Caco-2 (cell line): ENCODE measurements at regions of chr5 and their contacts with region 1.

Region 1: GRCh38 chr5:174636086-174636485 is 88.3 kb upstream of the MSX2 start:
- DNase-seq: peak; percentile 59 to 75
- H3K4me3 ChIP-seq: no peak overlapping the region
- H3K4me3 Mint-ChIP-seq: no peak overlapping the region
- H3K27ac Mint-ChIP-seq: no peak overlapping the region
- H3K4me1 ChIP-seq: peaks cover 24% of the 10 kb centered on the region
- H3K4me1 Mint-ChIP-seq: peaks cover 41% of the 10 kb centered on the region
- H3K27me3 ChIP-seq: no peaks in the 10 kb centered on the region
- H3K27me3 Mint-ChIP-seq: no peaks in the 10 kb centered on the region
- CTCF ChIP-seq: no peak

Region 2: DNA sequence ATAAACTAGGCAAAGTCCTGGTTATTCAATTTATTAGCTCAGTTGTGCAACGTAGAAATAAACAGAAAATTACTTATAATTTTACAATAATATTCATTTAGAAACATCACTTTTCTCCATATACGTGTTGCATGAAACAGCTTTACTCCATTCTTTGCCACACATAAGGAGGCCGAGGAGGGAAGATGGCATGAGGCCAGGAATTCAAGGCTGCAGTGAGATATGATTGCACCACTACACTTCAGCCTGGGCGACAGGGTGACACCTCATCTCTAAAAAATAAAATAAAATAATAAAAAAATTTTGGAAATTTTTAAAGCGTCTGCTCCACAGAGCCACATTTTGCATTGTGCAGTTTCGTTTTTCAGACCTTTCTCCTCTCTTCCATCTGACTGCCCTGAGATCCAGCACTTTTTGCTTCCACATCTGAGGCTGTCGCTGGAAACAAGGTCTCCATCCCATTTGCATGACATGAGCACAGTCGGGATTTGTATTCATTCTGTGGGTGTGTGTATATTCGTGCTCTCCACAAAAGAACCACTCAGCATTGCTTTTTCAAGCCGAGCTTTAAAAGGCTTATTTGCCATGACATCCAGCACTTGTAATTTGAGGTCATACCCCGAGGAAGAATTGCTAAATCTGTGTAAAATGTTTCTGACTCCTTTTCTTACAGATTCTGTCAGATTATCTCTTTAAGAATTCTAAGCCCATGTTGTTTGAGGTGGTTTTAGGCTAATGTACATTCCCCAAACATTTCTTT is 10.3 kb before region 1 on chr5:
- CTCF ChIA-PET with region 1: no interaction called
- POLR2A ChIA-PET with region 1: no interaction called
- intact Hi-C with region 1: loop called (anchors 1 kb)
- DNase-seq: no peak
- H3K4me3 ChIP-seq: no peak overlapping the region
- H3K4me3 Mint-ChIP-seq: no peak overlapping the region
- H3K27ac Mint-ChIP-seq: peak overlapping the region; percentile 41
- H3K4me1 ChIP-seq: peaks cover 51% of the 10 kb centered on the region
- H3K4me1 Mint-ChIP-seq: peaks cover 49% of the 10 kb centered on the region
- H3K27me3 ChIP-seq: no peaks in the 10 kb centered on the region
- H3K27me3 Mint-ChIP-seq: no peaks in the 10 kb centered on the region
- CTCF ChIP-seq: no peak

Region 3: DNA sequence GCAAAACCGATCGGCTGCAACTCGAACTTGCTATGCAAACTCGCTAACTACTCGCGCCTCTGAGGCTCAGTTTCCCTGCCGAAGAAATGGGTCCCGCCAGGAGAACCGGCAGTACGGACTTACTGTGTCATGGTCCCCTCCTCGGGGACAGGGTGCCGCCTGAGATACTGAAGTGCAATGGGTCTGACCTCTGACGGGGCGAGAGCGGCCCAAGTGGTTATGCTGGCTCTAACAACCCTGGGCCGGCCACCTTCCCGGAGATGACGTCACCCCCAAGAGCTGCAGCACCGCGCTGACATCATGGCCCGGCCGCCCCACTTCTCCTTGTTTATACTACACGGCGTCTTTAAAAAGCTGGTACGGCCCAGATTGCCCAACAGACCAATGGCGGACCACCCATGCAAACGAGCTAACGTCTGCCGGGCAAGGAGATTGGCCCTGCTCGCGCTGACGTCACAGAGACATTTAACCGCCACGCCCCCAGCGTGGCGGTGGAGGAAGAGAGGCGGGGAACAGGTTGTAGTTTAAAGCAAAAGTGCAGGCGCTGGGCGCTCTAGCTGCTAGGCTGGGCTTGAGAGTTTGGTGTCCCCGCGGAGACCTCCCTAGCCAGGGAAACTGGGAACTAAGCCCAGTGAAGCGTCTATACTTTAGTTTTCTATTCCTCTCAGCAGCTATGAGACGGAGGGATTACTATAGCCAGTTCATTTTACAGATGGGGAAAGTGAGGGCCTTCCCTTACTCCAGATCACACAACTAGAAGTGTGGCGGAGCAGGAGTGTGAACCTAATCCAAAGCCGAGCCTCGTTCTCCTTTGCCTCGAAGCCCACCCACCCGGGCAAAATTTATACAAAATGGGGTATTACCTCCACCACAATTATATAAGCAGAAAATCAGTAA is 1901.8 kb after region 1 on chr5:
- CTCF ChIA-PET with region 1: no interaction called
- POLR2A ChIA-PET with region 1: no interaction called
- intact Hi-C with region 1: loop called (anchors 5 kb)
- DNase-seq: peak; percentile 97 to 100
- H3K4me3 ChIP-seq: peak overlapping the region; percentile 90
- H3K4me3 Mint-ChIP-seq: peak overlapping the region; percentile 96
- H3K27ac Mint-ChIP-seq: peak overlapping the region; percentile 96
- H3K4me1 ChIP-seq: peaks cover 14% of the 10 kb centered on the region
- H3K4me1 Mint-ChIP-seq: peaks cover 29% of the 10 kb centered on the region
- H3K27me3 ChIP-seq: no peaks in the 10 kb centered on the region
- H3K27me3 Mint-ChIP-seq: no peaks in the 10 kb centered on the region
- CTCF ChIP-seq: no peak